ENCODE measurements at regions of chr6 and their contacts with region 1.

Region 1: GRCh38 chr6:77299931-77300330 is 163.4 kb downstream of the HTR1B start:
- DNase-seq: no peak
- H3K4me3 ChIP-seq: no peak overlapping the region
- H3K27ac ChIP-seq: no peak overlapping the region
- H3K4me1 ChIP-seq: no peaks in the 10 kb centered on the region
- H3K27me3 ChIP-seq: no peaks in the 10 kb centered on the region
- CTCF ChIP-seq: no peak
- POLR2A ChIP-seq: no peak

Region 2: DNA sequence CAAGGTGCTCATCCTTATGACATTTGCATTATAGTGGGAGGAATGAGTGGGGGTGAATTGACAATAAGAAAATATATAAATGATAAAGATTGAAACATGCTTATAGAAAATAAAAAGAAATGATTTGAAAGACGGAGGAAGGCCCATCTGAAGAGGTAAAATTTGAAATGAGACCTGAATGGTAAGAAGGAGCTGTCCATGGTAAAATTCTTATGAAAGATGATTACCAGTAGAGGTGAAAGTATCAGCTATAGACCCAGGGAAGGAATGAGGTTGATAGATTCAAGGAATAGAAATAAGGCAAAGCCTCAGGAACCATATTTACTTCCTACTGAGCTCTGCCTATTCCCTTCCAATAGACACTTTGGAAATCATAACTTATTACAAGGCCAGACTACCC is 13.7 kb after region 1 on chr6:
- intact Hi-C with region 1: loop called (anchors 1 kb)
- DNase-seq: no peak
- H3K4me3 ChIP-seq: no peak overlapping the region
- H3K27ac ChIP-seq: no peak overlapping the region
- H3K4me1 ChIP-seq: no peaks in the 10 kb centered on the region
- H3K27me3 ChIP-seq: no peaks in the 10 kb centered on the region
- CTCF ChIP-seq: no peak
- POLR2A ChIP-seq: no peak

Measured in breast epithelium (tissue), 4 donors.